Activated CD4-positive, alpha-beta memory T cell treated with anti-CD3 and anti-CD28 coated beads for 36 hours (primary cell): ENCODE measurements at regions of chr2 and their contacts with region 1.

Region 1: GRCh38 chr2:12658310-12658945 is 58.3 kb upstream of the TRIB2 start:
- DNase-seq: no peak
- H3K4me3 Mint-ChIP-seq: no peak overlapping the region
- H3K27ac Mint-ChIP-seq: peak overlapping the region; percentile 72
- H3K4me1 Mint-ChIP-seq: peaks cover 15% of the 10 kb centered on the region
- H3K27me3 Mint-ChIP-seq: no peaks in the 10 kb centered on the region

Region 2: DNA sequence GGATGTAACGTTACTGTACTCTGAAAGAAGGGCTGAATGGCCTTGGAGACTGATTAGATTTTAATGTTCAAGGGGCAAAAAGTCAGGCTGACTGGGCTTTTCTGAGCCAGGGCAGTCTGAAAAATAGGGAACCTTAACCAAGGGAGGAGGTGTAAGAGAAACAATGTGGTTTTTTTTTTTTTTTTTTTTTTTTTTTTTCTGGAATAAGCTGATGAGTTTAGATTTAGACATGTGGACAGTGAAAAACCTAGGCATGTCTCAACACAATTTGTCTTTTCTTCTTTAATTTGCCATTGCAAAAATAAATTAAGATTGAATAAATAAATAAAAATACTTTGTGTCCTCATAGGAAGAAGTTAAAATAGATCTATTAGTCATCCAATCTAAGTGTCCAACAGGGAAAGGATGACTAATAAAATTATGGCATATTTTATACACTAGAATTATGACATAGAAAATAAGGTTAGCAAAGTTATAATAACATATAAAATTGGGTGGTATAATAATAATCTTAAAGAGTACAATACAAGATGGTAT is 179.3 kb before region 1 on chr2:
- CTCF ChIA-PET with region 1: no interaction called
- POLR2A ChIA-PET with region 1: no interaction called
- intact Hi-C with region 1: no loop called
- DNase-seq: no peak
- H3K4me3 Mint-ChIP-seq: no peak overlapping the region
- H3K27ac Mint-ChIP-seq: no peak overlapping the region
- H3K4me1 Mint-ChIP-seq: peaks cover 3% of the 10 kb centered on the region
- H3K27me3 Mint-ChIP-seq: no peaks in the 10 kb centered on the region

Region 3: GRCh38 chr2:12636837-12637581 is 21.4 kb before region 1 on chr2:
- CTCF ChIA-PET with region 1: no interaction called
- POLR2A ChIA-PET with region 1: no interaction called
- intact Hi-C with region 1: no loop called
- DNase-seq: no peak
- H3K4me3 Mint-ChIP-seq: no peak overlapping the region
- H3K27ac Mint-ChIP-seq: no peak overlapping the region
- H3K4me1 Mint-ChIP-seq: peaks cover 26% of the 10 kb centered on the region
- H3K27me3 Mint-ChIP-seq: no peaks in the 10 kb centered on the region

Region 4: GRCh38 chr2:12702305-12703121 is 44.1 kb after region 1 on chr2:
- CTCF ChIA-PET with region 1: no interaction called
- POLR2A ChIA-PET with region 1: no interaction called
- intact Hi-C with region 1: loop called (anchors 5 kb)
- DNase-seq: no peak
- H3K4me3 Mint-ChIP-seq: peak overlapping the region; percentile 21
- H3K27ac Mint-ChIP-seq: no peak overlapping the region
- H3K4me1 Mint-ChIP-seq: peaks cover 42% of the 10 kb centered on the region
- H3K27me3 Mint-ChIP-seq: peaks cover 3% of the 10 kb centered on the region

Region 5: DNA sequence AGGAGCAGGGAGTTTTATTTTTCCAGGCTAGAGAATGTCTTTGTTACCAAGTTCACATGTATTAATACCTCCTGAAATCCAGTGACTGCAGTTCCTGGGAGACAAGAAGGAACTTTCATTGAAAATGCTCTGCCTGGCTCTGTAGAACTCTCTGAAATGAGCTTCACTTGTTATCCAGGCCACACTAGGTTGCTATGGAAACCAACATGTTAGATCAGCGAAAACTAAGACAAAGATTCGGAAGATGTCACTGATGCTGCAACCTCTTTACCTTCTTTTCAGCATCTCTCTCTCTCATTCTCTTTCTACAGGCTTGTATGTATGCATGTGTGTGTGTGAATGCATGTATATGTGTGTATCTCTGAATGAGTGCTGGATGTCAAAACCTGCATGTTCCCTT is 276.8 kb after region 1 on chr2:
- CTCF ChIA-PET with region 1: no interaction called
- POLR2A ChIA-PET with region 1: no interaction called
- intact Hi-C with region 1: no loop called
- DNase-seq: no peak
- H3K4me3 Mint-ChIP-seq: no peak overlapping the region
- H3K27ac Mint-ChIP-seq: no peak overlapping the region
- H3K4me1 Mint-ChIP-seq: peaks cover 6% of the 10 kb centered on the region
- H3K27me3 Mint-ChIP-seq: no peaks in the 10 kb centered on the region